Ascending aorta (tissue), 2 donors: ENCODE measurements at regions of chr2 and their contacts with region 1.

Region 1: GRCh38 chr2:191020221-191020741 is 6.3 kb upstream of the STAT1 start:
- DNase-seq: peak; percentile 73 to 96
- H3K4me3 ChIP-seq: peak overlapping the region; percentile 77 to 85
- H3K27ac ChIP-seq: peak overlapping the region; percentile 92 to 93
- H3K4me1 ChIP-seq: peaks cover 0 to 4% of the 10 kb centered on the region in 2 donors
- H3K27me3 ChIP-seq: no peaks in the 10 kb centered on the region
- CTCF ChIP-seq: peak; percentile 9 to 47 (median 18)

Region 2: DNA sequence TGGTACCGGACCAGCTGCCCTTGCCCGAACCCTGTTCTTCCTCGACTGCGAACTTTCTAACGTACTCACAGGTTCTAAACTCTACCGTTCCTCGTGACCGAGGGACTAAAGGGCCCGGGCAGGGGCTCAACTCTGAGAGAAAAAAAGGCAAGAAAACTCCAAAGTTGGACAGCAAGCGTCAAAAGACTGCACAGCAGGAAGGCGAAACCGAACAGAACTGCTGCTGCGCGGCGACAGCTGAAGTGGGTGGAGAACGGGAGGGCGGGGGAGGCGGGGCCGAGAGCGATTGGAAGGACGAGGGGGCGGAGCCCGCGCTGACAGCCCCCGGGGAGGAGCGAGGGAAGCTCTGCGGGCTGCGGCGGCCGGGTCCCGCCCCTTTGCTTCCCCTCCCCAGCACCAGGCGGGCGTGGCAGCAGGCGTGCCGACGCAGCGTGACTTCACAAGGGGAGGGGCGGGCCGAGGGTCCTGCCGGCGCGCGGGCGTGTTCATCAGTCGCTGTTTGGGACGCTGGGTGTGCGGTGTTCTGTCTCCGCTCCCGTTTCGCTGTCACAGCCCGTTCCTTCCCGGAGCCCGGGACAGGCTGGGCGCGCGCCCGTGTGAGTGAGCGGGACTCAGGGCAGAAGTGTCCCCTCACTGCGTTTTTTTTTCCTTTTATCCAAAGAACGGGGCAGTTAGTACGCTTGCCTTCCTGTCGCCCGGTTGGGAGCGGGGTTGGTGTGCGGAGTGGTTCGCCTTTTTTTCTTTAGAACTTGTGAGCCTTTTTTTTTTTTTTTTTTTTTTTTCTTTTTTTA is 657.6 kb after region 1 on chr2 and contains the start of gene NABP1:
- intact Hi-C with region 1: loop called (anchors 5 kb)
- DNase-seq: peak; percentile 95 to 99
- H3K4me3 ChIP-seq: peak within 1 kb of the TSS; percentile 55 to 82
- H3K27ac ChIP-seq: peak within 1 kb of the TSS; percentile 90 to 96
- H3K4me1 ChIP-seq: peaks cover 4 to 10% of the 10 kb centered on the region in 2 donors
- H3K27me3 ChIP-seq: no peaks in the 10 kb centered on the region
- CTCF ChIP-seq: no peak
- total RNA-seq, gene NABP1: 38.5 TPM